Activated CD4-positive, alpha-beta T cell treated with anti-CD3 and anti-CD28 coated beads, Interleukin-2, amount 10 ng/mL, durations not matched to agents 24 days and 14 days (primary cell): ENCODE measurements at regions of chr11 and their contacts with region 1.

Region 1: DNA sequence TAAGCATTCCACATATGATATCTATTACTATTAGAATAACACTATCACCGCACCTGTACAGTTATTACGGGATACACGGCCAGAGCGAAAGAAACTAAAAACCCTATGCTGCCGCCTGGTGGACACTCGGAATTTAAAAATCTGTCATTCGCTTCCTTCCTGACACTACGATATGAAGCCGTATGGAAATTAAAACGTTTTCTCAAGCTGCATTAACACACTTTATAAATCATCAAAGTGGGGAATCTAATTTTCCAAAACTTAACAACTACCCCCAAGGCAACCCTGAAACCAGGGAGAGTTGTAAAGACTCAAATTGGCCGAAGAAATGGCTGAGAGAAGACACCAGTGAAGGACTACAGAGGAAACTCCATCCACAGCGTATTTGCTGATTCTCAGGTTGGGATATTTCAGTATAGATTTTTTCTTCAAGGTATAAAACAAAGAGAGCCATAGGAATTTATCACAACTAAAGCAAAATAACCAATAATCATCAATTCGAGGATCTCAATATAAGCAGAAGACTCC is 1.4 kb downstream of the CCDC73 start:
- DNase-seq: peak; percentile 88
- H3K4me3 Mint-ChIP-seq: peak overlapping the region; percentile 60
- H3K27ac Mint-ChIP-seq: no peak overlapping the region
- H3K4me1 Mint-ChIP-seq: peaks cover 4% of the 10 kb centered on the region
- H3K27me3 Mint-ChIP-seq: peaks cover 21% of the 10 kb centered on the region

Region 2: GRCh38 chr11:32323814-32324130 is 469.2 kb before region 1 on chr11:
- intact Hi-C with region 1: loop called (anchors 1 kb)
- DNase-seq: no peak
- H3K4me3 Mint-ChIP-seq: no peak overlapping the region
- H3K27ac Mint-ChIP-seq: no peak overlapping the region
- H3K4me1 Mint-ChIP-seq: no peaks in the 10 kb centered on the region
- H3K27me3 Mint-ChIP-seq: peaks cover 18% of the 10 kb centered on the region

Region 3: DNA sequence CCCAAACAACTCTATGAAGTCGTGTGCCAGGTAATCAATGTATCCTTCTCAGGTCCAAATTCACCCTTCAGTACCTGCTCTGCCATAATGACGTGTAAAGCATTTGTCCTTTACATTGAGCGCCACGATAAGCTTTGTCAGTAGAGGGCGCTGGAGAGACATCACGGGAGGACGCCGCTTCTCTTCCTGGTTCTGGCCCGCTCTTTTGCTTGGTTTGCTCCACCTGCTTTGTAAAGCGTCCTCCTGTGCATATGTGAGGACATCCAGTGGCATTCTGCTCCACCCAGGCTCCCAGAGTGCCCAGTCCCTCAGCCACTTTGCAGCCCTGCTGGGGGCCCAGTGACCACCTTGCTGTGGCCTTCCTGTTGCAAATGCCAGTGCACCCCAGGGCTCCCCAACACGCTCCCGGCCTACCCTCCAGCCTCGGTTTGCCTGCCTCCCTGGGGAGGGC is 418.7 kb before region 1 on chr11:
- intact Hi-C with region 1: loop called (anchors 1 kb)
- DNase-seq: peak; percentile 83
- H3K4me3 Mint-ChIP-seq: no peak overlapping the region
- H3K27ac Mint-ChIP-seq: no peak overlapping the region
- H3K4me1 Mint-ChIP-seq: no peaks in the 10 kb centered on the region
- H3K27me3 Mint-ChIP-seq: no peaks in the 10 kb centered on the region

Region 4: GRCh38 chr11:32435511-32435941 is 357.5 kb before region 1 on chr11 and contains the start of gene WT1:
- intact Hi-C with region 1: loop called (anchors 5 kb)
- DNase-seq: no peak
- H3K4me3 Mint-ChIP-seq: peak within 1 kb of the TSS; percentile 40
- H3K27ac Mint-ChIP-seq: peak within 1 kb of the TSS; percentile 67
- H3K4me1 Mint-ChIP-seq: peaks cover 8% of the 10 kb centered on the region
- H3K27me3 Mint-ChIP-seq: peaks cover 79% of the 10 kb centered on the region
- total RNA-seq, gene WT1: not detected in 2 replicates

Region 5: GRCh38 chr11:32751381-32751780 is 41.6 kb before region 1 on chr11:
- intact Hi-C with region 1: loop called (anchors 2 kb)
- DNase-seq: no peak
- H3K4me3 Mint-ChIP-seq: no peak overlapping the region
- H3K27ac Mint-ChIP-seq: no peak overlapping the region
- H3K4me1 Mint-ChIP-seq: no peaks in the 10 kb centered on the region
- H3K27me3 Mint-ChIP-seq: peaks cover 5% of the 10 kb centered on the region